Activated B cell treated with CpG ODN at 0.5 μM for 24 hours (primary cell): ENCODE measurements at regions of chr3 and their contacts with region 1.

Region 1: DNA sequence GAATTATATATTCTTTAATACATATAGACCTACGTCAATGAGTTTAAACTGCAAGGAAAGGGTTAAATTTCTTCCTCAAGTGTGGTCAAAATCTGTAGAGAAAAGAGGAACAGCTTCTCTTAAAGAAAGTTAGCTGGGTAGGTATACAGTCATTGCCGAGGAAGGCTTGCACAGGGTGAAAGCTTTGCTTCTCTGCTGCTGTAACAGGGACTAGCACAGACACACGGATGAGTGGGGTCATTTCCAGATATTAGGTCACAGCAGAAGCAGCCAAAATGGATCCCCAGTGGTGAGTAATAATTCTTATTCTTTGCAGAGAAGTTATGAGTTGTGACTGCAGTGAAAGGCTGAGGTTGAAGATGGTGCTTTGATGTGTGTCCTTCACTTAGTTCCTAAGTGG is at the start of gene CD86:
- DNase-seq: no peak
- ATAC-seq: peak; percentile 94
- H3K4me3 Mint-ChIP-seq: peak within 1 kb of the TSS; percentile 84
- H3K27ac Mint-ChIP-seq: peak within 1 kb of the TSS; percentile 79
- H3K4me1 Mint-ChIP-seq: peaks cover 49% of the 10 kb centered on the region
- H3K27me3 Mint-ChIP-seq: no peaks in the 10 kb centered on the region
- CTCF ChIP-seq: no peak
- total RNA-seq, gene CD86: 31.2 and 31.7 TPM in 2 replicates

Region 2: DNA sequence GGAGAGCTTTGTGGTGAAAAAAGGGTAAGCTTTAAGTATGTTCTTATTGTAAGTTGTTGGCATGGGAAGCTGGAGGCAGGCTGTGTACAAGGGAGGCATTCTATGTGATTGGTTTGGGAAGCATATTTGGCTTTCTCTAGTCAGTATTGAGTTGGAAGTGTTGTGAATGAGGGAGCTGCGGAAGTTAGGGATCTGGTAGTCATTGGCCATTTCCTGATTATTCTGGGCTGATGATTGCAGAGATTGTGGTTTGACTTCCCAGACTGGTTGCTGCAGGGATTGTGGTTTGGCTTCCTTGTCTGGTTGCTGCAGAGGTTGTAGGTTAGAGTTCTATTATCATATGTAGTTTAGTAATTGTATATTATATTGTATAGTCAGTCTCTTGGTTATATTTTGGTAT is 1126.2 kb before region 1 on chr3:
- CTCF ChIA-PET with region 1: no interaction called
- POLR2A ChIA-PET with region 1: no interaction called
- intact Hi-C with region 1: no loop called
- DNase-seq: no peak
- ATAC-seq: no peak
- H3K4me3 Mint-ChIP-seq: no peak overlapping the region
- H3K27ac Mint-ChIP-seq: no peak overlapping the region
- H3K4me1 Mint-ChIP-seq: no peaks in the 10 kb centered on the region
- H3K27me3 Mint-ChIP-seq: no peaks in the 10 kb centered on the region
- CTCF ChIP-seq: no peak

Region 3: GRCh38 chr3:122004991-122005565 is 50.1 kb before region 1 on chr3:
- CTCF ChIA-PET with region 1: no interaction called
- POLR2A ChIA-PET with region 1: interaction called, 8 read pairs
- intact Hi-C with region 1: loop called (anchors 1 kb)
- DNase-seq: peak; percentile 49
- ATAC-seq: peak; percentile 76
- H3K4me3 Mint-ChIP-seq: peak overlapping the region; percentile 76
- H3K27ac Mint-ChIP-seq: peak overlapping the region; percentile 91
- H3K4me1 Mint-ChIP-seq: peaks cover 65% of the 10 kb centered on the region
- H3K27me3 Mint-ChIP-seq: no peaks in the 10 kb centered on the region
- CTCF ChIP-seq: no peak

Region 4: DNA sequence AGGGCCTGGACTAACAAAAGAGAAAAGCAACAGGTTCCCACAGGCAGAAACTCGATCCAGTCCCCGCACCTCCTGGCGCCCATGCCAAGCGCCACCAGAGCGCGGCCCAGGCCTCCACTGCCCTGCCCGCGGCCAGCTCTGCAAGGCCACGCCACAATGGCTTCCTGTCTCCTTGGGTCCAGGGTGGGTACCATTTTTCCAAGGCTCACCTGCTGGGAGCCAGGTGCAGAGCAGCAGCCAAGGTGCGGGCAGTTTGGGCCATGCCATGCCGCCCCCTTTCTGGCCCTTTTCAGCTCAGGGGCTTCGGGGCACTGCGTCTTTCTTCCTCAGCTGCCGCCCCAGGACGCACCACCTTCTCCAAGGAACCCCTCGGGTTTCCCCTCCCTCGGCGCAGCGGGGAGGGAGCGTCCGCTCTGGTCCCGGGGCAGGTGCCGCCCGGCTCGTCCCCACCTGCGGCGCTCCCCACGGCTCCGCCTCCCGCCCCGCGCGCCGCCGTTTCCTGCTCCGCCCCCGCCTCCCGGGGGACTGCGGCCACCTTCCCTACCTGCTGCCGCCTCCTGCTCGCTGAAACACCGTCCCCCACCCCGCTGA is 33.3 kb before region 1 on chr3 and contains the start of gene ILDR1:
- CTCF ChIA-PET with region 1: no interaction called
- POLR2A ChIA-PET with region 1: interaction called, 10 read pairs
- intact Hi-C with region 1: no loop called
- DNase-seq: peak; percentile 72
- ATAC-seq: peak; percentile 89
- H3K4me3 Mint-ChIP-seq: peak within 1 kb of the TSS; percentile 77
- H3K27ac Mint-ChIP-seq: peak within 1 kb of the TSS; percentile 50
- H3K4me1 Mint-ChIP-seq: peaks cover 52% of the 10 kb centered on the region
- H3K27me3 Mint-ChIP-seq: no peaks in the 10 kb centered on the region
- CTCF ChIP-seq: no peak
- total RNA-seq, gene ILDR1: 1.3 and 1.4 TPM in 2 replicates

Region 5: GRCh38 chr3:122067214-122067550 is 12.0 kb after region 1 on chr3:
- CTCF ChIA-PET with region 1: interaction called, 3 read pairs
- POLR2A ChIA-PET with region 1: interaction called, 26 read pairs
- intact Hi-C with region 1: loop called (anchors 1 kb)
- DNase-seq: no peak
- ATAC-seq: peak; percentile 35
- H3K4me3 Mint-ChIP-seq: peak overlapping the region; percentile 54
- H3K27ac Mint-ChIP-seq: peak overlapping the region; percentile 72
- H3K4me1 Mint-ChIP-seq: peaks cover 59% of the 10 kb centered on the region
- H3K27me3 Mint-ChIP-seq: no peaks in the 10 kb centered on the region
- CTCF ChIP-seq: no peak

Region 6: GRCh38 chr3:122092460-122093165 is 37.4 kb after region 1 on chr3:
- CTCF ChIA-PET with region 1: no interaction called
- POLR2A ChIA-PET with region 1: interaction called, 9 read pairs
- intact Hi-C with region 1: loop called (anchors 1 kb)
- DNase-seq: no peak
- ATAC-seq: peak; percentile 50
- H3K4me3 Mint-ChIP-seq: peak overlapping the region; percentile 46
- H3K27ac Mint-ChIP-seq: peak overlapping the region; percentile 81
- H3K4me1 Mint-ChIP-seq: peaks cover 40% of the 10 kb centered on the region
- H3K27me3 Mint-ChIP-seq: no peaks in the 10 kb centered on the region
- CTCF ChIP-seq: no peak

Region 7: DNA sequence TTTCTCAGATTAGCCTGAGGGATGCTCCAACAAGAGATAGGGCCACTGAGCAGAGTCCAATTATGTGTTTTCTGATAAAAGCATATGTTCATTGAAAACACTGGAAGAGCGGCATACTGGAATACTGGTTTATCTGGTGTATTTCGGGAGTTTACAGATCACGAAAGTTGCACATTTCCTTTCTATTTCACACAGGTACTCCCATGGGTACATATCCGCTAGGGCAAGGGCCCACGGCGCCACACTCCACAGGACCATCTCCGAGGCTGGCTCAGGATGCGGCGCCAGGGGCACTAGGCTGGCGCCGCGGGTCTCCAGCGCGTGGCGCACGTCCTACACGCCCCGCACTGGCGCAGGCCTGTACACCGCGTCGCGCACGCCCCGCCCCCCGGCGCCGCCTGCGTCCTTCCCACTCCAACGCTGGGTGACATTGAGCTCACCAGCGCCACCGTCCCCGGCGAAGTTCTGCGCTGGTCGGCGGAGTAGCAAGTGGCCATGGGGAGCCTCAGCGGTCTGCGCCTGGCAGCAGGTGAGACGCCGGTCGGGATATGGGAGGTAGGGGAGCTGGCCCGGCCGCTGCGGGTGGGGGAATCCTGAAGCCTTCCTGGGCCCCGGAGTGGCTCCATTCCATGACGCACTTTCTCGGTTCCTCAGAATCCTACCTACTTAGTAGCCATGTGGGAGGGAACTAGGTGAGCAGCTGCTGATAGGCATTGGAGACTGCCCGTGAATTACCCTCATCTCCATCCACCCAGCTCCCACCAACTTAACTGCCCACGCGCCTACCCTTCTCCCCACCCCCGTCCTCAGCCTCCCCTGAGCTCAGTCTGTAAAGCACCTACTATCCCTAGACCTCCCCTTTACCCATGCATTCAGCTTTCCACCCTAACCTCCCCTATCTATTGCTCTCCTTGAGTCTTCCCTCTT is 328.8 kb after region 1 on chr3 and contains the start of gene FAM162A:
- CTCF ChIA-PET with region 1: no interaction called
- POLR2A ChIA-PET with region 1: no interaction called
- intact Hi-C with region 1: loop called (anchors 5 kb)
- DNase-seq: peak; percentile 93
- ATAC-seq: peak; percentile 94
- H3K4me3 Mint-ChIP-seq: peak within 1 kb of the TSS; percentile 94
- H3K27ac Mint-ChIP-seq: peak within 1 kb of the TSS; percentile 91
- H3K4me1 Mint-ChIP-seq: peaks cover 38% of the 10 kb centered on the region
- H3K27me3 Mint-ChIP-seq: no peaks in the 10 kb centered on the region
- CTCF ChIP-seq: no peak
- total RNA-seq, gene FAM162A: 28.5 and 33.9 TPM in 2 replicates